Right cardiac atrium (tissue), 5 donors: ENCODE measurements at regions of chr5 and their contacts with region 1.

Region 1: GRCh38 chr5:124343451-124343867 is 403.0 kb downstream of the ZNF608 start:
- DNase-seq: no peak
- ATAC-seq: peak; percentile 54 to 80
- H3K4me3 ChIP-seq: no peak overlapping the region
- H3K27ac ChIP-seq: peak overlapping the region; percentile 89
- H3K4me1 ChIP-seq: peaks cover 2% of the 10 kb centered on the region
- H3K27me3 ChIP-seq: no peaks in the 10 kb centered on the region

Region 2: GRCh38 chr5:123937230-123937629 is 406.2 kb before region 1 on chr5:
- intact Hi-C with region 1: no loop called
- DNase-seq: peak; percentile 21 to 45 (median 44)
- ATAC-seq: peak; percentile 52 to 53
- H3K4me3 ChIP-seq: no peak overlapping the region
- H3K27ac ChIP-seq: no peak overlapping the region
- H3K4me1 ChIP-seq: no peaks in the 10 kb centered on the region
- H3K27me3 ChIP-seq: no peaks in the 10 kb centered on the region

Region 3: GRCh38 chr5:124395287-124395686 is 51.8 kb after region 1 on chr5:
- intact Hi-C with region 1: loop called in 1 of 4 experiments (anchors 5 kb)
- DNase-seq: peak in 1 of 3 donors; percentile 40
- ATAC-seq: peak; percentile 66 to 72
- H3K4me3 ChIP-seq: no peak overlapping the region
- H3K27ac ChIP-seq: no peak overlapping the region
- H3K4me1 ChIP-seq: no peaks in the 10 kb centered on the region
- H3K27me3 ChIP-seq: no peaks in the 10 kb centered on the region